Heart right ventricle (tissue), 16 donors: ENCODE measurements at regions of chr15 and their contacts with region 1.

Region 1: DNA sequence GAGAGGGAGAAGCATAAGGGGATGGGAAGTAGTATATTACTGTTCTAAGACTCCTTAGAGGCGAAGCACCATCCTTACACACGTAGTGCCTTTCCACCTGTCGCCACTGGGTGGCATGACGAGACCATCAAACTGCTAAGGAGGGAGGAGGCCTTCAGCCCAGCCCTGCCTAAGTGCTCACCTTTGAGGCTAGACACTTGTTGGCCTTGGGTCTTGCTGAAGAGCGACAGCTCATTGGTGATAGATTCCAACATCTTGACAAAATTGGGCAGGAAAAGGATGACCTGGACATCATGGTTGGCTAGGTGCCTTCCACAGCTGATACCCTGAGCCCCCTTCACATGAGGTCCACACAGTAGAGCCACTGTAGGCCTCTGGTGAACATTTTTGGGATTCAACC is 19.6 kb downstream of the CLK3 start:
- DNase-seq: peak in 1 of 2 donors; percentile 61
- ATAC-seq: peak; percentile 49 to 78 (median 74)
- H3K4me3 ChIP-seq: no peak overlapping the region
- H3K27ac ChIP-seq: no peak overlapping the region
- H3K4me1 ChIP-seq: peaks cover 0 to 7% (median 0%) of the 10 kb centered on the region in 9 donors
- H3K27me3 ChIP-seq: no peaks in the 10 kb centered on the region
- CTCF ChIP-seq: peak; percentile 66 to 93 (median 87)

Region 2: DNA sequence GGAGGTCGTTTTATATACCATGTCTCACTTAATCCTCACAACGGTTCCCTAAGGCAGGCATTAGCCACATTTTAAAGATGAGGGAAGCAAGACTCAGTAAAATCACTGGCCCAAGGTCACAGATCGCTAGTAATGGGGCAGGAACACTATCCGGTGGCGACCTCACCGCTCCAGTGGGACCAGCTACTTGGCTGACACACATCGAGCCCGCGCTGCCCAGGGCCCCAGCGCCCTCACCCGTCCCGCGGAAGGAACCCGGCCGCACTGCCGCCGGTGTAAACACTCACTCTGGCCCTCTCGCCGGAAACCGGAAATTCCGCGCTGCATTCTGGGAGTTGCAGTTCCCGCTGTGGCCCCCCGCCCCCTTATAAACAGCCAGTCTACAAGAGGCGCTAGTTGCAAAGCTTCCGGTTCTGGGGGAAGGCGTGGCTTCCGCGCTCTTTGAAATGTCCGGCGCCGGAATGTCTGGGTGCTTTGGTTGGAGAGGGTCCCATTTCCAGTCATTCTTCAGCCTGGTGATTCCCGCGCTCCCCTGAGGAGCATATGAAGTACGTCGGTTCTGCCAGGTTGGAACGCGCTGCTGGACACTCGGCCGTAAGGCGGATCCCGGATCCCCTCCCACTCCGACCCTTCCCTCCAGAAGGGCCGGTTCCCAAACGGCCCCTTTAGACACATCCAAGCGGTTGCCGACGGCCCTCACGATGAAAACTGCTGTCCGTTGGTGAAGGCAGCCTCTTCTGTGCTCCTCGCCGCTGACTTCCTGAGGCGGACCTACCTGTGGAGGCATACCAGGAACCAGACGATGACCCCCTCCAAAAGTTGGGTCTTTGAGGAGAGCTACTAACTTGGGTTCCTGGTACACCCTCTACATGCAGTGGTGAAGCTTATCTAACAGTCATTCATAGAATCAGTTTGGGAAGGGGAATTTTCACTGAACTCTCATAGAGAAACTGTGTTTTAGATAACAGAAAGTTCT is 174.1 kb before region 1 on chr15 and contains the start of gene UBL7:
- intact Hi-C with region 1: no loop called
- DNase-seq: peak; percentile 95 to 98
- ATAC-seq: peak; percentile 99 to 100 (median 99)
- H3K4me3 ChIP-seq: peak within 1 kb of the TSS; percentile 48 to 95 (median 72)
- H3K27ac ChIP-seq: peak within 1 kb of the TSS; percentile 54 to 92 (median 86)
- H3K4me1 ChIP-seq: peaks cover 0 to 25% (median 18%) of the 10 kb centered on the region in 9 donors
- H3K27me3 ChIP-seq: no peaks in the 10 kb centered on the region
- CTCF ChIP-seq: peak in 5 of 9 donors; percentile 14 to 48 (median 45)
- total RNA-seq, gene UBL7: 49.1 to 56.6 (median 52.7) TPM

Region 3: DNA sequence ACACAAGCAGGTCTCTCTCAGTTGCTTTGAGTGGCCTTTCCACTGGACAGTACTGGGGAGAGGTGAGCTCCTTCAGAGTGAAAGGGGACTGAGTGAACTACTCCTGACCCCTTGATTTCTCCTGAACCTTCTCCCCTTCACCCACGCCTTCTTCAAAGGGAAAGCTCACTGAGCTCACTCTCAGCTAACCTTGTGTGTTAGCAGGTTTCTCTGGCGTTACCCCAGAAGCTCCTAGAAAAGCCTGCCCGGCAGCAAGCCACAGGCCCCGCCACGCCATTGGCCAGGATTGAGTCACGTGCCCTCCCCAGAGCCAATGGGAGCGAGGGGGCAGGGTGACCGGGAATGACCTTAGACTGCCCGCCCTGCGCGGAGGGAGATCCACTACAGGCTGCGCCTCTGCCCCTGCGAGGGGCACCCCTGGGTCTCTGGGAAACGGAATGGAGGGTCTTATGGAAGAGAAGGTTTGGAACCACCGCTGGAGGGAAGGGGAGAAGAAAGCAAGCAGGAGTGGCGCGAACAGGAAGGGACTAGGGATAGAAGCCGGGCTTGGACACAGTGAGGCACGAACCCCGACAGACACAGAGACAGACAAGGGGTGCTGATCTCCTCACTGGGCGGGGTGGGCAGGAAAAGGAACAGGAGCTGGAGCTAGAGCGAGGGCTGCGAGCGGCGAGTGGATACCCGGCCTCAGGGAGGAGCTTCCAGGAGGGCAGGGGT is 36.9 kb before region 1 on chr15:
- intact Hi-C with region 1: no loop called
- DNase-seq: peak; percentile 95 to 96
- ATAC-seq: peak; percentile 96 to 99 (median 98)
- H3K4me3 ChIP-seq: peak overlapping the region; percentile 58 to 81 (median 65)
- H3K27ac ChIP-seq: peak overlapping the region; percentile 73 to 95 (median 90)
- H3K4me1 ChIP-seq: peaks cover 8 to 34% (median 16%) of the 10 kb centered on the region in 9 donors
- H3K27me3 ChIP-seq: no peaks in the 10 kb centered on the region
- CTCF ChIP-seq: no peak

Region 4: DNA sequence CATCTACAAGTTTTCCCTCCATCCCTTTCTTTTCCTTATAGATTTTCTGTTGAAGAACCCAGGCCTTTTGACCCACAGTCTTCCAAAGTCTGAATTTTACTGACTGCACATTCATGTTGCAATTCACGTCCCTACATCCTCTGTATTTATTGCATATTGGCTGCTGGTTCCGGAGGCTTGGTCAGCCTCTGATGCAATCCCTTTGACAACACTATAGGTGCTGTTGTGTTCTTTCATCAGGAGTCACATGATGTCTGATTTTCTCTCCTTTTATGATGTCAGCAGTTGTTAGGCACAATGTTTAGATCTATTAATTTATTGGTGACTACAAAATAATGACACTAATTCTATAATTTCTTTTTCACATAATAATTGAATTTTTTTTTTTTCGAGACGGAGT is 81.4 kb after region 1 on chr15:
- intact Hi-C with region 1: no loop called
- DNase-seq: no peak
- ATAC-seq: no peak
- H3K4me3 ChIP-seq: no peak overlapping the region
- H3K27ac ChIP-seq: no peak overlapping the region
- H3K4me1 ChIP-seq: no peaks in the 10 kb centered on the region
- H3K27me3 ChIP-seq: no peaks in the 10 kb centered on the region
- CTCF ChIP-seq: no peak

Region 5: DNA sequence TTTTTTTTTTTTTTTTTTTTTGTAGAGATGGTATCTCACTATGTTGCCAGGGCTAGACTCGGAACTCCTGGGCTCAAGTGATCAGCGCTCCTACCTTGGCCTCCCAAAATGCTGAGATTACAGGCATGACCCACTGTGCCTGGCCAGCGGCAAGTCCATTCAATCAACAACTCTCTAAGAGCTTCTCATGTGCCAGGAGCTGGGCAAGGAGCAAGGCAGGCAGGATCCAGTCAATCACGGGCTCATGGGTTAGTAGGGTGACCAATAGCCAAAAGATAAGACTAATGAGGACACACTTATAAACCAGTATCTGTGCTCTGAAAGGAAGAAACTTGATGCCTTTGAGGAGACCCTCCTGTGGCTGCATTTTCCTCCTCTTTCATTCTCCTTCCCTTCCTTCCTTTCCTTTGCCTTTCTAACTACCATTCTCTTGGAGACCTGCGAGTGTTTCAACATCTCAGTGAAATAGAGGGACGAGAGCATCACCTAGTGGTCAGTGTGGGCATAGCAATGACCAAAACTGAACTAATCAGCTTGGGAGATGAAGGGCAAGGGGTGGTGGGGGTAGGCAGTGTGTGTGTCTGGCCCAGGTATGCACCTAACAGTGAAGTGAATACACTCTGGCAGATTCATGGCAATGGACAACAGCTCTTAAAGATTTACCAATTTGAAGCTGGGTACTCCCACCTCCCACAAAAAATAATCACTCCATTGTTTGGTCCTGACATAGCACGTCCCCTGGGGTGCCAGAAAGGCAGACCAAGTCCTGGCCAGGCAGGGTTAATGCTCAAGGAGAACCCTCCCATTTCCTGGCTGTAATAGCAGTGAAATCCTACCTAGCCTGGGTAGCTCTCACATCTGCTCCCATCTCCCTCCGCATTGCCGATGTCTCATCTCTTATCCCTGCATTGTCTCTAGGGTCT is 315.1 kb after region 1 on chr15:
- intact Hi-C with region 1: loop called (anchors 2 to 10 kb)
- DNase-seq: peak in 1 of 2 donors; percentile 73
- ATAC-seq: peak; percentile 66 to 82 (median 69)
- H3K4me3 ChIP-seq: no peak overlapping the region
- H3K27ac ChIP-seq: no peak overlapping the region
- H3K4me1 ChIP-seq: peaks cover 0 to 20% (median 14%) of the 10 kb centered on the region in 9 donors
- H3K27me3 ChIP-seq: peaks cover 0 to 4% (median 0%) of the 10 kb centered on the region in 7 donors
- CTCF ChIP-seq: peak; percentile 88 to 98 (median 95)

Region 6: DNA sequence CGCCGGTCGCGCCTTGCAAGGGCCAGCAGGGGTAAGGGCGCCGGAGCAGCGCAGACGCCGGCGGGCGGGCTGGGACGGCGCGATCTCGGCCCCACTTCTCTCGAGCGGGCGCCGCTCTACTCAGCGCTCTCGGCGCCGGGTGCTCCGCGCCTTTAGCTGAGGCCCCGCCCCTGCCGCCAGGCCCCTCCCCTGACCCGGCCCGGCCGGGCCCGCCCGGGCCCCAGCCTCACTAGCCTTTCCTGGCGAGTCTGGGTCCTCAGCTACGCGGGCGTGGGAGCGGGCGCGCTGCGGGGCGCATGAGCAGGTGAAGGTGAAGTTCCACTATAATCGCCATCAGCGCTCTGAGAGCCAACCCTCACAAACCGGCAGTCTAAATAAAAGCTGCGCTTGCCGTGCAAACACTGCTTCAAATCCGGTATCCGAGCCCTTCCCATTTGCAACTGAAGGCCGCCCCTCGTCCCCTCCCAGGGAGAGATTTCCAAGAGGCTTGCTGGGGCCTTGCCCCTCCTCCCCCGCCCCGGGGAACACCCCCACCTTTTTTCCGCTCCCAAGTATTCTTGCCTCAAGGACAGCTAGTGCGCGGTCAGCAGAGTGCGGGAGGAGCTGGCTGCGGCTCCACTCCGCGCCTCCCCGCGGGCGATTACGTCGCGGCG is 321.5 kb after region 1 on chr15 and contains the start of gene RPP25:
- intact Hi-C with region 1: loop called (anchors 2 to 10 kb)
- DNase-seq: peak; percentile 63 to 83
- ATAC-seq: peak; percentile 83 to 93 (median 89)
- H3K4me3 ChIP-seq: peak within 1 kb of the TSS; percentile 23 to 83 (median 60)
- H3K27ac ChIP-seq: peak within 1 kb of the TSS; percentile 19 to 87 (median 76)
- H3K4me1 ChIP-seq: peaks cover 0 to 62% (median 33%) of the 10 kb centered on the region in 9 donors
- H3K27me3 ChIP-seq: peaks cover 0 to 49% (median 16%) of the 10 kb centered on the region in 7 donors
- CTCF ChIP-seq: no peak
- total RNA-seq, gene RPP25: 0.83 to 3.0 (median 1.3) TPM